Activated B cell treated with CpG ODN at 0.5 μM for 24 hours (primary cell): ENCODE measurements at regions of chr7 and their contacts with region 1.

Region 1: GRCh38 chr7:155598810-155599210 is 45.7 kb upstream of the RBM33 start:
- DNase-seq: peak; percentile 79
- ATAC-seq: peak; percentile 70
- H3K4me3 Mint-ChIP-seq: no peak overlapping the region
- H3K27ac Mint-ChIP-seq: no peak overlapping the region
- H3K4me1 Mint-ChIP-seq: peaks cover 3% of the 10 kb centered on the region
- H3K27me3 Mint-ChIP-seq: peaks cover 18% of the 10 kb centered on the region
- CTCF ChIP-seq: no peak

Region 2: DNA sequence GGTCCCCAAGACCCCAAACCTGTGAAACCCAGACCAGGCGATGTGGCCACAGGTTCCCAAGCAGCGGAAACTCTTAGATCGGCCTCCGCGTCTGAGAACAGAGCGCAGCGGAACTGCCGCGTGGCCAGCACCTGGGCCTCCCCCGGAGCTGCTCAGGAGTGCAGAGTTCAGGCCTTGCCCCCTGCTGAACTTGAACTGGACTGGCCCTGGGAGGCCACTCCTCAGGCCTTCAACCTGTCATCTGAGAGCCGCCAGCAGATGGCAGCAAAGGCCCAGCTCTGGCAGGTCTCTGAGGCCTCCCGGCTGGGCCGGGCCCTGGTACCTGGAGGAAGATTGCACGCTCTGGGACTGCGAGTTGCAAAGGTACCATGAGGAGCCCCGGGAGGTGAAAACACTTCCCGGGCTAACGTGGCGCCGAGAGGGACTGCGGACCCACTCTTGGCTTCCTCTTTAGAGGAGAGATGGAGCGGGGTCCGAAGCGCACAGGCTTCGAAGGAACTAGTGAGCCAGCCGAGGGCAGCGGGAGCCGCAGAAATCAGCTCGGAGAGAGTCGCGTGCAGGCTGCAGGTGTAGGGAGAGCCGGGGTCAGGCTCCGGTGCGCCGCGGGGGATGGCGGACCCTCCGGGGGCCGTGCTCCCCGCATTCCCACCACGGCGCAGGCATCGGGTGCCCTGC is 685.0 kb before region 1 on chr7:
- CTCF ChIA-PET with region 1: interaction called, 7 read pairs
- POLR2A ChIA-PET with region 1: no interaction called
- intact Hi-C with region 1: loop called (anchors 5 kb)
- DNase-seq: peak; percentile 86
- ATAC-seq: peak; percentile 94
- H3K4me3 Mint-ChIP-seq: peak overlapping the region; percentile 84
- H3K27ac Mint-ChIP-seq: no peak overlapping the region
- H3K4me1 Mint-ChIP-seq: peaks cover 3% of the 10 kb centered on the region
- H3K27me3 Mint-ChIP-seq: peaks cover 25% of the 10 kb centered on the region
- CTCF ChIP-seq: peak; percentile 26

Region 3: GRCh38 chr7:155724327-155725005 is 125.7 kb after region 1 on chr7:
- CTCF ChIA-PET with region 1: interaction called, 13 read pairs
- POLR2A ChIA-PET with region 1: no interaction called
- intact Hi-C with region 1: no loop called
- DNase-seq: no peak
- ATAC-seq: peak; percentile 41
- H3K4me3 Mint-ChIP-seq: peak overlapping the region; percentile 71
- H3K27ac Mint-ChIP-seq: peak overlapping the region; percentile 83
- H3K4me1 Mint-ChIP-seq: peaks cover 83% of the 10 kb centered on the region
- H3K27me3 Mint-ChIP-seq: no peaks in the 10 kb centered on the region
- CTCF ChIP-seq: no peak

Region 4: DNA sequence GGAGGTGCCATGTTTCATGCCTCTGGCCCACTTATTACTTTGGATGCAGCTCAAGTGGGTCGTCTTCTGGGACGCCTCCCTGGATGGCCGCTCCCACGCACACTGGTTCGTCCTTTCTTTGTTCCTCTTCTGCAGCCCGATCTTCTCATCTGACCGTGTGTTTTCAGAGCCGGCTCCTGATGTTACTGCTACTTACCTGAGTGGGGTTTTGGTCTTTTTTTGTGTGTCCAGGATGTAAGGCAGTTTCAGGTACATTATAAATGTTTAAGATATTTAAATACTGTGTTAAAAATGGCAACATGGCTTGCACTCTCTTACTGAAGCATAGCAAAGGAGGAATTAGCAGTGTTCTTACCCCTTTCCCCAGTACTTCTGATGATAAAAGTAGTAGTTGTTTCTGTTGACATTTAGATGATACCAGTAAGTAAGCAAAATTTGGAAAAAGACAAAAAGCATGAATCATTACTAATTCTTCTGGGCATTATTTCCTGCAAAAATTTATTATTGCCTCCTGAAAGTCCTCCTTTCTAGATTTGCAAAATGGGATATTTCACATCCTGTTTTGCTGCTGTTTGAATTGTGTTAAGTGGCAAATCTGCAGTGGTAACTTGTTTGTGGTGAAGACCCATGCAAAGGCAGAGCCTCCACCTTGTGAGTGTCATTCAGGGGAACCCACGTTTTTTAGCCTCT is 154.1 kb after region 1 on chr7:
- CTCF ChIA-PET with region 1: interaction called, 10 read pairs
- POLR2A ChIA-PET with region 1: no interaction called
- intact Hi-C with region 1: no loop called
- DNase-seq: no peak
- ATAC-seq: peak; percentile 49
- H3K4me3 Mint-ChIP-seq: peak overlapping the region; percentile 42
- H3K27ac Mint-ChIP-seq: peak overlapping the region; percentile 76
- H3K4me1 Mint-ChIP-seq: peaks cover 81% of the 10 kb centered on the region
- H3K27me3 Mint-ChIP-seq: no peaks in the 10 kb centered on the region
- CTCF ChIP-seq: no peak

Region 5: DNA sequence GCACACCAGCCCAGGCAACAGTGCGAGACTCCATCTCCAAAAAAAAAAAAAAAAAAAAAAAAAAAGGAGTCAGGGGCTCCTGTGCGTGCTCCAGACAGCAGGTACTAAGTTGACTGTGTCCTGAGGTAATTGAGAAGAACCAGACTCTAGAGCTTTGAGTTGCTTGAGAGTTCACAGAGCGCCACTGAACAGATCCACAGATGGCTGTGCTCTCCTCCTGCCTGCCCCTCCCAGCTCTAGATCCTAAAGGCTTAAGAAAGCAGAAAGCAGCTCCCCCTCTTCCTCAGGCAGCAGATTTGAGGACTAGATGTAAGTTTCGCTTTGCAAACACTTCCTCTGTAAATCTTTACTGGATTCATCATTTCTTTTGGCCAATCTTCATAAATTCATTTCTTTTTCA is 174.7 kb after region 1 on chr7:
- CTCF ChIA-PET with region 1: interaction called, 109 read pairs
- POLR2A ChIA-PET with region 1: interaction called, 3 read pairs
- intact Hi-C with region 1: loop called (anchors 1 kb)
- DNase-seq: no peak
- ATAC-seq: no peak
- H3K4me3 Mint-ChIP-seq: no peak overlapping the region
- H3K27ac Mint-ChIP-seq: no peak overlapping the region
- H3K4me1 Mint-ChIP-seq: no peaks in the 10 kb centered on the region
- H3K27me3 Mint-ChIP-seq: no peaks in the 10 kb centered on the region
- CTCF ChIP-seq: no peak

Region 6: GRCh38 chr7:156380261-156380660 is 781.5 kb after region 1 on chr7:
- CTCF ChIA-PET with region 1: no interaction called
- POLR2A ChIA-PET with region 1: no interaction called
- intact Hi-C with region 1: no loop called
- DNase-seq: no peak
- ATAC-seq: no peak
- H3K4me3 Mint-ChIP-seq: no peak overlapping the region
- H3K27ac Mint-ChIP-seq: no peak overlapping the region
- H3K4me1 Mint-ChIP-seq: no peaks in the 10 kb centered on the region
- H3K27me3 Mint-ChIP-seq: no peaks in the 10 kb centered on the region
- CTCF ChIP-seq: no peak